Esophagus muscularis mucosa (tissue), 4 donors: ENCODE measurements at regions of chr9 and their contacts with region 1.

Region 1: DNA sequence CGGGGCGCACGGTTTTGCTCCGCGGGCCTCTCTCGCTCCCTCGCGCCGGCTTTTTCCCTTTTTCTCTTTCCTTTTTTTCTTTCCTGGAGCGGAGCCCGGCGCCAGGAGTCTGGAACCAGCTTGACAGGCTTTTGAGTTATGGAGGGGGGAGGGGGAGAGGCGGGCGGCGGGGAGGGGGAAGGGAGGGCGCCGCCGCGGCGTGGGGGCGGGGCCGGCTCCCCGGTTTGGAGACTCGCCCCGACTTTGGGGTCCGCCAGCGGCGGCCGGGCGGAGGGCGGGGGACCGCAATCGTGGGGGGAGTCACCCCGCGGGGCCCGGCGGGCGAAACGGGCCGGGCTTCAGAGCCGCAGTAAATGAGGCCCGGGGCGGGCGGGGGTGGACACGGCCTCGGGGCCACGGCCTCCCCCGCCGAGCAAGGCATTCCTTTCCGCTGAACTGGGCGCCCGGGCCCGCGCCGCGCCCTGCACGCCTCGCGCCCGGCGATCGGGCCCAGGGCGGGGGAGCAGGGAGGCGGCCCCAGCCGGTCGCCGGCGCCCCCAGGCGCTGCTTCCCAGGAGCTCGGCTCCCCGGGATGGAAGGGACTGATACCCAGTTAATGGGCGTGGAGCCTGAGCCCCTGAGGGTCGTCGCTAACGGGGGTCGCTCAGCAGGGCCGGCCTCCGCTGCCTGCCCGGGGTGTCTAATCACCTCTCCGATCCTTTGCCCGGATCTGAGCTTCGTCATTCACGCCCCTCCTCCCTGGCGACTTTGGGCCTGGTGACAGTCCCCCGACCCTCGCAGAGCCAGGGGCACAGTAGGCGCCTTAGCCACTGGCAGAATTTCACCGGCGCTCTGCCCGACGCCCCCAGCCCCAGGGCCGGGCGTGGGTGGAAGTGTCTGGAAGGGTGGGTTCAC is 138.1 kb downstream of the C9orf50 start:
- DNase-seq: peak; percentile 97
- H3K4me3 ChIP-seq: peak overlapping the region; percentile 61 to 77 (median 66)
- H3K27ac ChIP-seq: peak overlapping the region; percentile 97 to 100 (median 98)
- H3K4me1 ChIP-seq: peaks cover 65 to 95% (median 81%) of the 10 kb centered on the region in 4 donors
- H3K27me3 ChIP-seq: no peaks in the 10 kb centered on the region
- CTCF ChIP-seq: peak in 1 of 3 experiments; percentile 12
- EP300 ChIP-seq: no peak
- POLR2A ChIP-seq: no peak

Region 2: GRCh38 chr9:128940271-128940921 is 542.4 kb before region 1 on chr9:
- intact Hi-C with region 1: no loop called
- DNase-seq: no peak
- H3K4me3 ChIP-seq: no peak overlapping the region
- H3K27ac ChIP-seq: peak overlapping the region in 3 of 4 donors; percentile 25 to 62 (median 34)
- H3K4me1 ChIP-seq: peaks cover 19 to 33% (median 24%) of the 10 kb centered on the region in 4 donors
- H3K27me3 ChIP-seq: no peaks in the 10 kb centered on the region
- CTCF ChIP-seq: no peak
- EP300 ChIP-seq: no peak
- POLR2A ChIP-seq: no peak

Region 3: GRCh38 chr9:129139993-129140396 is 342.8 kb before region 1 on chr9:
- intact Hi-C with region 1: loop called (anchors 2 kb)
- DNase-seq: peak; percentile 99
- H3K4me3 ChIP-seq: peak overlapping the region; percentile 47 to 60 (median 58)
- H3K27ac ChIP-seq: peak overlapping the region; percentile 93 to 99 (median 98)
- H3K4me1 ChIP-seq: peaks cover 68 to 80% (median 78%) of the 10 kb centered on the region in 4 donors
- H3K27me3 ChIP-seq: no peaks in the 10 kb centered on the region
- CTCF ChIP-seq: no peak
- EP300 ChIP-seq: peak; percentile 78
- POLR2A ChIP-seq: no peak

Region 4: GRCh38 chr9:129524582-129525270 is 42.0 kb after region 1 on chr9:
- intact Hi-C with region 1: no loop called
- DNase-seq: no peak
- H3K4me3 ChIP-seq: no peak overlapping the region
- H3K27ac ChIP-seq: no peak overlapping the region
- H3K4me1 ChIP-seq: no peaks in the 10 kb centered on the region
- H3K27me3 ChIP-seq: no peaks in the 10 kb centered on the region
- CTCF ChIP-seq: no peak
- EP300 ChIP-seq: no peak
- POLR2A ChIP-seq: no peak